Panc1 (cell line): ENCODE measurements at regions of chr12 and their contacts with region 1.

Region 1: GRCh38 chr12:108856428-108857157 is 790 bp downstream of the SSH1 start:
- DNase-seq: no peak
- ATAC-seq: peak; percentile 28
- H3K4me3 ChIP-seq: peak overlapping the region; percentile 61 to 99
- H3K27ac ChIP-seq: peak overlapping the region; percentile 89
- H3K4me1 ChIP-seq: peaks cover 42% of the 10 kb centered on the region
- H3K27me3 ChIP-seq: no peaks in the 10 kb centered on the region
- CTCF ChIP-seq: no peak

Region 2: DNA sequence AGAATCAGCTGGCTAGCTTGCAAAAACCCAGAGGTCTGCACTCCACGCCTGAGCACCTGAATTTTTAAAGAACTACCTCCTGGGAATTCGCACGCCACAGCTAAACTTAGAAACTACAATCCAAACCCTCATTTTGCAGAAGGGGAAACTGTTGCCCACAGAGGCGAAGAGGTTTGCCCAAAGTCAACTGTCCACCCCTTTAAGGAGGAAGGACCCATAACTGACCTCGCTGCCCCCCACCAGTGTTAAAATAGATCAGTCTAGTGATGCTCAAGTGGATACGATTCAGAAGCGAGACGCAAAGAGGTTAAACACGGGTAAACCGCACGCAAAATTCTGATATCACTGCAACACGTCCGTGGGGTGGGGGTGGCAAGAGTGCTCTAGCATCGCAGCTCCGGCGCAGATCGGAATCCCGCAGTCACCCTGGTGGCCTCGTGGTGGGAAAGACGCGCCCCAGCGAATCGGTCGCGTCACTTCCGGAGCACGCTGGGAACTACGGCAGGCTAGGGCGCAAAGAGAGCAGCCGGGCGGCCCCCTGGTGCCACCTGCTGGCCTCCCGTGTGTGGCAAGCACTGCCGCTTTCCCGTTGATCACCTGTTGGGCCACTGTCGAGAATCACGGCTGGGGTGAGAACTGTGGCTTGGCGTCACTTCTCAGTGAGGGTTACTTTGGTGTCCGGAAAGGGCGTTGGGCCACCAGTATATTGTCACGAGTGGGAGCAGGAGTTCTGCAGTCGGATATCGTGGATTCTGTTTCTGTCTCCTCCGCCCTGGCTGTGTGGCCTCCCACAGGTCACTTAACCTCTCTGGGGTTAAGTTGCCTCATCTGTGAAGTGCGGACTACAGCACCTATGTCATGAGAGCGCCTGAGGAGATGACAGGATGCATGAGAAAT is 236.7 kb after region 1 on chr12 and contains the start of gene ALKBH2:
- CTCF ChIA-PET with region 1: no interaction called
- POLR2A ChIA-PET with region 1: no interaction called
- in situ Hi-C with region 1: no loop called
- intact Hi-C with region 1: loop called (anchors 10 kb)
- DNase-seq: peak; percentile 69
- ATAC-seq: peak; percentile 81
- H3K4me3 ChIP-seq: peak within 1 kb of the TSS; percentile 64 to 85
- H3K27ac ChIP-seq: peak within 1 kb of the TSS; percentile 97
- H3K4me1 ChIP-seq: peaks cover 18% of the 10 kb centered on the region
- H3K27me3 ChIP-seq: no peaks in the 10 kb centered on the region
- CTCF ChIP-seq: peak; percentile 99
- total RNA-seq, gene ALKBH2: 41.6 TPM